MCF 10A (cell line): ENCODE measurements at regions of chr1 and their contacts with region 1.

Region 1: GRCh38 chr1:17922833-17923232 is 167.7 kb downstream of the ACTL8 start:
- DNase-seq: peak; percentile 54
- H3K4me3 Mint-ChIP-seq: no peak overlapping the region
- H3K27ac Mint-ChIP-seq: no peak overlapping the region
- H3K4me1 Mint-ChIP-seq: no peaks in the 10 kb centered on the region
- H3K27me3 Mint-ChIP-seq: peaks cover 45% of the 10 kb centered on the region
- CTCF ChIP-seq: peak; percentile 53

Region 2: GRCh38 chr1:18041102-18041501 is 118.3 kb after region 1 on chr1:
- CTCF ChIA-PET with region 1: no interaction called
- POLR2A ChIA-PET with region 1: no interaction called
- intact Hi-C with region 1: loop called (anchors 1 kb)
- DNase-seq: no peak
- H3K4me3 Mint-ChIP-seq: no peak overlapping the region
- H3K27ac Mint-ChIP-seq: no peak overlapping the region
- H3K4me1 Mint-ChIP-seq: no peaks in the 10 kb centered on the region
- H3K27me3 Mint-ChIP-seq: peaks cover 33% of the 10 kb centered on the region
- CTCF ChIP-seq: no peak

Region 3: DNA sequence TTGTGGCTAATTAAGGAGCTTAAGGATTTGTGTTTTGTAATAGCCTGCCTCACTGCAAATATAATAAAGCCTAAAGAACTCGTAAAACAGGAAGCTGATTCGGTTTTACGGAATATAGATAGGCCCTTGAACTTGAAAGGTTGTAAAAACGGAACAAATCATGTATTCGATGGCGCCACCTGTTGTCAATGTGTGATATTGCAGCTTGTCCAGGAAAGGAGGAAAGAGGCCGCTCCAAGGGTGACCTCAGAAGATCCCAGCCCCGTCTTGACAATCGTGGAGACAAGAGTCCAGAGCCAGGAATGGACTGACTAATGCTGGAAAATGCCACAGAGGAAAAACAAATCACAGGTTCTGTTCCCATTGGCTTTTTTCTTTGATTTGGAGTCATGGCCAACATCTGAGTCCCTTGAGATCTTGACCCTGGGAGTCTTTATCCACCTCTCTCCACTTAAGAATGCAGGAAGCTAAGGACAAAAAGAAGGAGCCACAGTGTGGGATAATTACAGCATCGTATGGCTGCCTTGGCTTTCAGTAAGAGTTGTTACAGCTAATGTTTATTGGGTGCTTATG is 177.7 kb after region 1 on chr1:
- CTCF ChIA-PET with region 1: interaction called, 14 read pairs
- POLR2A ChIA-PET with region 1: no interaction called
- intact Hi-C with region 1: loop called (anchors 1 kb)
- DNase-seq: peak; percentile 75
- H3K4me3 Mint-ChIP-seq: no peak overlapping the region
- H3K27ac Mint-ChIP-seq: no peak overlapping the region
- H3K4me1 Mint-ChIP-seq: no peaks in the 10 kb centered on the region
- H3K27me3 Mint-ChIP-seq: peaks cover 43% of the 10 kb centered on the region
- CTCF ChIP-seq: peak; percentile 68

Region 4: GRCh38 chr1:18217398-18218043 is 294.7 kb after region 1 on chr1:
- CTCF ChIA-PET with region 1: no interaction called
- POLR2A ChIA-PET with region 1: no interaction called
- intact Hi-C with region 1: loop called (anchors 1 kb)
- DNase-seq: peak; percentile 30
- H3K4me3 Mint-ChIP-seq: no peak overlapping the region
- H3K27ac Mint-ChIP-seq: no peak overlapping the region
- H3K4me1 Mint-ChIP-seq: no peaks in the 10 kb centered on the region
- H3K27me3 Mint-ChIP-seq: peaks cover 42% of the 10 kb centered on the region
- CTCF ChIP-seq: no peak